Right cardiac atrium (tissue), 5 donors: ENCODE measurements at regions of chr6 and their contacts with region 1.

Region 1: GRCh38 chr6:7107578-7108195 is at the start of gene RREB1:
- DNase-seq: peak; percentile 75 to 86 (median 86)
- ATAC-seq: peak; percentile 77 to 82
- H3K4me3 ChIP-seq: peak within 1 kb of the TSS; percentile 79
- H3K27ac ChIP-seq: peak within 1 kb of the TSS; percentile 77
- H3K4me1 ChIP-seq: peaks cover under 1% of the 10 kb centered on the region
- H3K27me3 ChIP-seq: no peaks in the 10 kb centered on the region
- total RNA-seq, gene RREB1: 35.3 to 40.4 (median 38.0) TPM

Region 2: DNA sequence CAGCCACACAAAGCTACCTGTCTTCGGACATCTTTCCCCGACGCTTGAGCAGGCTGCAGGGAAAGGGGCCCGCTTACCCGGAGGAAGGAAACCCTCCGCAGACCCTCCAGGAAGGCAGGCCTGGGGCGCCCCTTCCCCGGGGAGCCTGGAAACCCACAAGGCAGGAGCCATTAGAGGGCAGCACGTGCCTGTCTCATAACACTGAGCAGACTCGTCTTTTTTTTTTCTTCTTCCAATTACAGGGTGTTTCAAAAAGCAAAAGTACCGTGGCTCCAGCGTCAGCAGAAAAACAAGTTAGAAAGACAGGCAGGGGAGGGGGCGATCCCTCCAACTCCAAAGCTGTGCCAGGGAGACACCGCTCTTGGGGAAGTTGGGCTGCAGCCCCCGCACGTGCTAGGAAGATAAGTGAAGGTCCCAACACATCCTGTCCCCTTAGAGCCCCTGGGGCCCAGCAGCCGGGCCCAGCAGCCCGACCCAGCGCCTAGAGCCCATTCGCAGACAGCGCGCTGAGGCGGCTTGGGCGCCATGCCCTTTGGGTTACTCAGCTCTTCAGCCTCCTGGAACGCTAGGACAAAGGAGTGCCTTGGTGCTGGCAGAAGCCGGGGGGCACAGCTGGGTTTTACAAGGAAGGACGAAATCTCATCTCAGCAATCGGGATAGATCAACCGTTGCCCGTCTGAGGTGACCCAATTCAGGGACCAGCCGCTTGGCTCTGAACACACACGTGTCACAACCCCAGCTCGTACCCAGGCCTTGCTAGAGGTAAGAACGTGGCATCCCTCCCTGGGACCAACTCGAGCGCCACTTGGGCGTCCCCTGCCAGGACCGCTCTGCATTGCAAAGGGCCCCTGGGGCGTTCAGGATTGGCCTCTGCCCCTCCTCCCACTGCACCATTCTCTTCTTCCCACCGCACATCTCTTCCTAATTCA is 382.9 kb before region 1 on chr6:
- intact Hi-C with region 1: loop called in 1 of 4 experiments (anchors 5 kb)
- DNase-seq: peak; percentile 78 to 94 (median 84)
- ATAC-seq: peak; percentile 88 to 90
- H3K4me3 ChIP-seq: peak overlapping the region; percentile 26
- H3K27ac ChIP-seq: peak overlapping the region; percentile 89
- H3K4me1 ChIP-seq: peaks cover 12% of the 10 kb centered on the region
- H3K27me3 ChIP-seq: no peaks in the 10 kb centered on the region

Region 3: DNA sequence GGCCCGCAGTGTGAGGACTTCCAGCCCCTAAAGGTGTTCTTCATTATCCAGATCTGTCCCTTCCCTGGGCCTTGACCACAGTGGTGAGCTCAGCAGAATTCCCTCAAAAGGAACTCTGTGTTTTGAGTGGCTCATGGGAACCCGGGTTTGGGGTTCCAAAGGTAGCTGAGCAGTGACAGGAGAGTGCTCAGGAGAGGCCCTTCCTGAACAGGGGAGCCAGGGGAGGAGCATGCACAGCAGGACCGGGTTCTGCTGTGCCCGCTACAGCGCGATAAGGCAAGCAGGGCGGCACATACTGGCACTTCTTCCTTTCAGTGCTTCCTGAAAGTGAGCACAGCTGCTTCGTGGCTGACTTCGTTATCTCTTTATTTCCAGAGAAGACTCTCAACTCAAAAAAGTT is 117.0 kb after region 1 on chr6:
- intact Hi-C with region 1: loop called in 1 of 4 experiments (anchors 10 kb)
- DNase-seq: no peak
- ATAC-seq: peak; percentile 49 to 60
- H3K4me3 ChIP-seq: no peak overlapping the region
- H3K27ac ChIP-seq: peak overlapping the region; percentile 33
- H3K4me1 ChIP-seq: peaks cover 7% of the 10 kb centered on the region
- H3K27me3 ChIP-seq: no peaks in the 10 kb centered on the region

Region 4: GRCh38 chr6:7261032-7261841 is 153.6 kb after region 1 on chr6:
- intact Hi-C with region 1: no loop called
- DNase-seq: peak; percentile 85 to 95 (median 94)
- ATAC-seq: peak; percentile 96 to 97
- H3K4me3 ChIP-seq: peak overlapping the region; percentile 60
- H3K27ac ChIP-seq: peak overlapping the region; percentile 73
- H3K4me1 ChIP-seq: no peaks in the 10 kb centered on the region
- H3K27me3 ChIP-seq: no peaks in the 10 kb centered on the region